Activated B cell treated with CpG ODN at 0.5 μM for 24 hours (primary cell): ENCODE measurements at regions of chr2 and their contacts with region 1.

Region 1: DNA sequence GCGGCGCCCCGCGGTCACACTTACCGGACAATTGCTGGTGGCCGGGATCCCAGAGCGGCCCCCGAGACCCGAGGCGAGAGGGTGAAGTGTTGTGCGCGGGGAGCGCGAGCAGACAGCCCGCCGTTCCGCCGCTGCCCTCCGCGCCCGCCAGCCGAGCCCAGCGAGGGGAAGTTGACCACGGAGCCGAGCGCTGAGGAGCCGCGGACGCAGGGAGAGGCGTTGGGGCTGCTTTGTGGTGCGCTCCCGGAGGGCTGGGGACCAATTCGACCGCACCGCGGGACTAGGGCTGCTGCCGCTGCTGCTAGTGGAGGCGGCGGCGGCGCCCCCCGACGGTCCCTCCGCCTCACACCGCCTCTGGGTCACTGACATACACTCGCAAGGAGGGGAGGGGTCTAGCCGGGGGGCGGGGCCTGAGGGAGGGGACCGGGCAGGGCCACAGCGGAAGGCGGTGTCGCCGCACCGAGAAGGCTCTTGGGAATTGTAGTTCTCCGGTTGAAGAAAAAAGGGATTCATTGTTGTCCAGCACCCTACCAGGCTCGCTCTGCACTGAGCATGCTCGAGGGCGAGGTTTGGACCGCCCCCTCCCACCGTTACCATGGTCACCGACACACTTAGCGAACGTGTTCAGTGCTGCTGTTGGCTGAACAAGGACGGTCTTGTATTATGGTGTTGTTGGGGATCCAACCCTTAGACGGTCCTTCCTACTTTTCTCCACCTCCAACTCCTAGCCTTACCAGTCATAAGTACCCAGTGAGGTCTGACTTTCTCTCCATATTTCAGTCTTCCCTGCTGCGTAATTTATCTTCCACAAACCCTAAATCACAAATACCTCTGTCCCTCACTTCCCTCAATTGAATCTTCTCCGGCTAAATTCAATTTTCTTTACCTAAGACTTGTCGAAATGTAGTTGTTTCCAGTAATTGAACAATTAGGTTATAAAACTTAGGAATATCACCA is at the start of gene PELI1:
- DNase-seq: peak; percentile 83
- ATAC-seq: peak; percentile 95
- H3K4me3 Mint-ChIP-seq: peak within 1 kb of the TSS; percentile 96
- H3K27ac Mint-ChIP-seq: peak within 1 kb of the TSS; percentile 95
- H3K4me1 Mint-ChIP-seq: peaks cover 37% of the 10 kb centered on the region
- H3K27me3 Mint-ChIP-seq: no peaks in the 10 kb centered on the region
- CTCF ChIP-seq: no peak
- total RNA-seq, gene PELI1: 81.4 and 93.1 TPM in 2 replicates

Region 2: DNA sequence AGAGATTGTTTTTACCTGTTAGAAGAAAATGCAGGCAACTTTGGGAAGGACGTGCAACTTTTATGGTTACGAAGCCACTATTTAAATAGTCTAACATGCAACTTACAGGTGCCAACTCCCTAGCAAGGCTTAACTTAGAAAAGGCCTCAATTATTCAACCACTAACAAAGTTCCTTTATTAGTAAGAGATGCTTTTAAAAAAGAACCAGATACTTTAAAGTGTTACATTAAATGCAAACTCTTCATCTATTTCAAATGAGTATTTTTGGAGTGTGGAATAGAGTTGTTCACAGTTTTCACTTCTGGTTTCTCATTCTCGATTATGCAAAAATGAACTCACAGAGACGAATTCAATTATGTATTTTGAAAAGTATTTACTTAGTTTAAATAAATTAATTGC is 51.8 kb before region 1 on chr2:
- CTCF ChIA-PET with region 1: no interaction called
- POLR2A ChIA-PET with region 1: interaction called, 20 read pairs
- intact Hi-C with region 1: loop called (anchors 1 kb)
- DNase-seq: no peak
- ATAC-seq: peak; percentile 31
- H3K4me3 Mint-ChIP-seq: peak overlapping the region; percentile 52
- H3K27ac Mint-ChIP-seq: peak overlapping the region; percentile 91
- H3K4me1 Mint-ChIP-seq: peaks cover 66% of the 10 kb centered on the region
- H3K27me3 Mint-ChIP-seq: no peaks in the 10 kb centered on the region
- CTCF ChIP-seq: no peak

Region 3: GRCh38 chr2:64114063-64114911 is 30.0 kb before region 1 on chr2:
- CTCF ChIA-PET with region 1: no interaction called
- POLR2A ChIA-PET with region 1: interaction called, 14 read pairs
- intact Hi-C with region 1: no loop called
- DNase-seq: no peak
- ATAC-seq: peak; percentile 54
- H3K4me3 Mint-ChIP-seq: peak overlapping the region; percentile 52
- H3K27ac Mint-ChIP-seq: peak overlapping the region; percentile 79
- H3K4me1 Mint-ChIP-seq: peaks cover 60% of the 10 kb centered on the region
- H3K27me3 Mint-ChIP-seq: no peaks in the 10 kb centered on the region
- CTCF ChIP-seq: no peak

Region 4: GRCh38 chr2:64179582-64180321 is 35.4 kb after region 1 on chr2:
- CTCF ChIA-PET with region 1: no interaction called
- POLR2A ChIA-PET with region 1: interaction called, 4 read pairs
- intact Hi-C with region 1: loop called (anchors 2 kb)
- DNase-seq: no peak
- ATAC-seq: peak; percentile 81
- H3K4me3 Mint-ChIP-seq: no peak overlapping the region
- H3K27ac Mint-ChIP-seq: peak overlapping the region; percentile 62
- H3K4me1 Mint-ChIP-seq: peaks cover 9% of the 10 kb centered on the region
- H3K27me3 Mint-ChIP-seq: no peaks in the 10 kb centered on the region
- CTCF ChIP-seq: no peak

Region 5: DNA sequence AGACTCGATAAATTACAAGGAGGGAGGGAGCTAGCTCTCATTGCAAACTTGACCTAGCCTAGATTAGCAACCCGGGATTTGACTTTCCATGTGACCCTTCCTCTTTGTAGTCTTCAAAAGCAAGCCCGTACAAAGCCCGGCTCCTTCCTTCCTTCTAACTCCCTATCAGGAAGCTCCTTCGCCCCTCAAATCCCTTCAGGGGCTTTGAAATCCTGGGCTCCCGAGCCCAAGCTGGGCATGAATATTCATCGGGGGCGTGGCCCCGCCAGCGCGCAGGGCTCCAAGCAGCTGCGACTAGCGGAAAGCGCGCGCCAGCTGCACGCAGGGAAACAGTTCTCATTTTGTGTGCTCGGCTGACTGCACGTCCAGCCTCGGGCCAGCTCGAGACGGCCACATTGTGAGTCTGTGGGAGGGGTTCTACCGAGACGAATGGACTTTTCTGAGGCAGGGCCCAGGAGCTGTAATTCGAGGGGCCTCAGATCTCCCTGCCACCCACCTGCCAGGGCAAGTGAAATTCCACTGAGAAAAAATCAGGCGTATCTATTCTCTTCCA is 83.9 kb after region 1 on chr2:
- CTCF ChIA-PET with region 1: interaction called, 3 read pairs
- POLR2A ChIA-PET with region 1: interaction called, 3 read pairs
- intact Hi-C with region 1: loop called (anchors 5 kb)
- DNase-seq: peak; percentile 67
- ATAC-seq: peak; percentile 96
- H3K4me3 Mint-ChIP-seq: peak overlapping the region; percentile 93
- H3K27ac Mint-ChIP-seq: peak overlapping the region; percentile 91
- H3K4me1 Mint-ChIP-seq: peaks cover 35% of the 10 kb centered on the region
- H3K27me3 Mint-ChIP-seq: no peaks in the 10 kb centered on the region
- CTCF ChIP-seq: no peak